Right cardiac atrium (tissue), 5 donors: ENCODE measurements at regions of chr15 and their contacts with region 1.

Region 1: GRCh38 chr15:28021281-28022039 is 77.7 kb downstream of the OCA2 start:
- DNase-seq: peak in 2 of 3 donors; percentile 76 to 81
- ATAC-seq: peak; percentile 29 to 46
- H3K4me3 ChIP-seq: no peak overlapping the region
- H3K27ac ChIP-seq: no peak overlapping the region
- H3K4me1 ChIP-seq: no peaks in the 10 kb centered on the region
- H3K27me3 ChIP-seq: no peaks in the 10 kb centered on the region

Region 2: GRCh38 chr15:28068930-28069329 is 47.5 kb after region 1 on chr15:
- intact Hi-C with region 1: no loop called
- DNase-seq: no peak
- ATAC-seq: no peak
- H3K4me3 ChIP-seq: no peak overlapping the region
- H3K27ac ChIP-seq: no peak overlapping the region
- H3K4me1 ChIP-seq: no peaks in the 10 kb centered on the region
- H3K27me3 ChIP-seq: no peaks in the 10 kb centered on the region

Region 3: DNA sequence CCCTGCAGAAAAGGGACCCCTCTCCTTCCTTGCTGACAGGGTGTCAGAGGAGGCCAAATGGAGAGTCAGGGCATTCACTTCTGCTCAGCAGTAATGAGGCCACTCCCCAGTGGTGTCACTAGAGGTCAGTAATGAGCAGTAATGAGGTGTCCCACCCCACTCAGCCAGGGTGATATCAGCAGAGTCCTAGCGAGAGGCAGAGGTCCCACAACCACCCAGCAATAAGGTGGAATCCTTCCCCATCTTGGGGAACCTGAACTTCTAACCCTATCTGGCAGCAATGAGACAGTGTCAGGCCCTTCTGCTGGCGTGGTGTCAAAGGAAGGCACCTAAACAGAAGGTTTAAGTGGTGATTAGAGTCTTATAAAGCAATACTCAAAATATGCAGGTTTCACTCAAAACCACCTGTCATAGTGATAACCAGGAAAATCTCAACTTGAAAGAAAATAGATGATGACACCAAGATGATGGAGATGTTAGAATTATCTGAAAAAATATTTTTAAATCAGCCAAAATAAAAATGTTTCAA is 64.8 kb after region 1 on chr15:
- intact Hi-C with region 1: loop called in 1 of 4 experiments (anchors 10 kb)
- DNase-seq: peak in 2 of 3 donors; percentile 43 to 74
- ATAC-seq: peak; percentile 88 to 96
- H3K4me3 ChIP-seq: no peak overlapping the region
- H3K27ac ChIP-seq: no peak overlapping the region
- H3K4me1 ChIP-seq: no peaks in the 10 kb centered on the region
- H3K27me3 ChIP-seq: no peaks in the 10 kb centered on the region

Region 4: GRCh38 chr15:28123408-28124023 is 102.1 kb after region 1 on chr15:
- intact Hi-C with region 1: loop called in 1 of 4 experiments (anchors 10 kb)
- DNase-seq: peak in 2 of 3 donors; percentile 50 to 85
- ATAC-seq: peak; percentile 55 to 63
- H3K4me3 ChIP-seq: no peak overlapping the region
- H3K27ac ChIP-seq: no peak overlapping the region
- H3K4me1 ChIP-seq: peaks cover 3% of the 10 kb centered on the region
- H3K27me3 ChIP-seq: no peaks in the 10 kb centered on the region

Region 5: GRCh38 chr15:28140062-28140461 is 118.6 kb after region 1 on chr15:
- intact Hi-C with region 1: no loop called
- DNase-seq: no peak
- ATAC-seq: no peak
- H3K4me3 ChIP-seq: no peak overlapping the region
- H3K27ac ChIP-seq: no peak overlapping the region
- H3K4me1 ChIP-seq: no peaks in the 10 kb centered on the region
- H3K27me3 ChIP-seq: no peaks in the 10 kb centered on the region

Region 6: DNA sequence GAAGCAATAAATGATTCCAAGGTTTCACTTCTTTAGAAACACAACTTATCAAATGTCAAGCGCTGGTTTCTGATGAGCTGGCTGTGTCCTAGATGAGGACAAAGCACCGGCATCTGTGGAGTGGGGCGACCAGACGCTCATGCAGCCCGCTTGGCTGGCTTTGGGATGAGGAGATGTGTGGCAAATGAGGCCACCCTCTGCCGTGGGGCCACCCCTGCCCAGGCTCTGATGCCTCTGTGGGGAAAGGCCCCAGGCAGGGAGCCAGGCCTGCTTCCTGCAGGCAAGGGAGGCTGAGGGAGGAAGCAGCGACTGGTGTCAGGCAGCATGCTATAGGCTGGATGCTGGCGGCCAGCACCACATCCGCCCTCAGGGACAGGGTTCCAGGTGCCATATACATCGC is 197.7 kb after region 1 on chr15:
- intact Hi-C with region 1: no loop called
- DNase-seq: no peak
- ATAC-seq: peak in 1 of 2 donors; percentile 31
- H3K4me3 ChIP-seq: no peak overlapping the region
- H3K27ac ChIP-seq: no peak overlapping the region
- H3K4me1 ChIP-seq: no peaks in the 10 kb centered on the region
- H3K27me3 ChIP-seq: no peaks in the 10 kb centered on the region